ENCODE measurements at regions of chr2 and their contacts with region 1.

Region 1: GRCh38 chr2:69816923-69817542 is 12.4 kb upstream of the GMCL1 start:
- DNase-seq: peak; percentile 68
- H3K4me3 Mint-ChIP-seq: no peak overlapping the region
- H3K27ac Mint-ChIP-seq: no peak overlapping the region
- H3K4me1 Mint-ChIP-seq: peaks cover 13% of the 10 kb centered on the region
- H3K27me3 Mint-ChIP-seq: no peaks in the 10 kb centered on the region

Region 2: GRCh38 chr2:69559442-69560146 is 257.4 kb before region 1 on chr2:
- intact Hi-C with region 1: loop called (anchors 1 kb)
- DNase-seq: no peak
- H3K4me3 Mint-ChIP-seq: no peak overlapping the region
- H3K27ac Mint-ChIP-seq: peak overlapping the region; percentile 59
- H3K4me1 Mint-ChIP-seq: peaks cover 52% of the 10 kb centered on the region
- H3K27me3 Mint-ChIP-seq: no peaks in the 10 kb centered on the region

Region 3: DNA sequence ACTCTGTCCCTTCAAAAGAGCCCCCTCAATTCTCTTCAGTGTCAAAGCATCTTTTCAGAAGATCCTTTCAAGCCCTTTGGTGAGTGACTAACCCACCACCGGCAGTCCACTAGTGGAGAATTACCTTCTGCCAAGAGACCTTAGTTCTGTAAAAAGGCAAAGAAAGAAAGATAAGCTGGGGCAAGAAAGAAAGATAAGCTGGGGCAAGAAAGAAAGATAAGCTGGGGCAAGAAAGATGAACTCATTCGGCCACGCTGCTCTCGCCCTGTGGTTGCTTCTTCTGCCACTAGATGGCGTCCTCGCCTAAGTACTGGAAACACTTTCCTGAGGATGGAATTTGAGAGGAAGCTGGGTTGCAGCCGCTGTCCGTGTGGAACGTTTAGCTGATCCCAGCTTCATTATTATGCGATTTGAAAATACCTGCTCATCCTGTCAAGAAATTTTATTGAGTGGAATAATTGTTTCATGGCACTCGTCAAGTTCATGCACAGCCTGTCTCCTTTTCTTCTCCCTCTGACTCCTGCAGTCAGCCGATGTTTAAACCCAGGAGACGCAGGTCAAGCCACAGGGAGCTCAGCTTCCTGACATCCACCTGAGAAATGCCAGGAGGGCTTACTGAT is 92.4 kb before region 1 on chr2:
- intact Hi-C with region 1: loop called (anchors 1 kb)
- DNase-seq: peak; percentile 76
- H3K4me3 Mint-ChIP-seq: peak overlapping the region; percentile 51
- H3K27ac Mint-ChIP-seq: peak overlapping the region; percentile 44
- H3K4me1 Mint-ChIP-seq: peaks cover 12% of the 10 kb centered on the region
- H3K27me3 Mint-ChIP-seq: peaks cover 8% of the 10 kb centered on the region

Region 4: GRCh38 chr2:69741619-69742466 is 75.2 kb before region 1 on chr2 and contains the start of gene ANXA4:
- intact Hi-C with region 1: loop called (anchors 1 kb)
- DNase-seq: peak; percentile 63
- H3K4me3 Mint-ChIP-seq: peak within 1 kb of the TSS; percentile 98
- H3K27ac Mint-ChIP-seq: peak within 1 kb of the TSS; percentile 96
- H3K4me1 Mint-ChIP-seq: peaks cover 26% of the 10 kb centered on the region
- H3K27me3 Mint-ChIP-seq: peaks cover 6% of the 10 kb centered on the region
- total RNA-seq, gene ANXA4: 36.2 and 38.0 TPM in 2 replicates

Region 5: DNA sequence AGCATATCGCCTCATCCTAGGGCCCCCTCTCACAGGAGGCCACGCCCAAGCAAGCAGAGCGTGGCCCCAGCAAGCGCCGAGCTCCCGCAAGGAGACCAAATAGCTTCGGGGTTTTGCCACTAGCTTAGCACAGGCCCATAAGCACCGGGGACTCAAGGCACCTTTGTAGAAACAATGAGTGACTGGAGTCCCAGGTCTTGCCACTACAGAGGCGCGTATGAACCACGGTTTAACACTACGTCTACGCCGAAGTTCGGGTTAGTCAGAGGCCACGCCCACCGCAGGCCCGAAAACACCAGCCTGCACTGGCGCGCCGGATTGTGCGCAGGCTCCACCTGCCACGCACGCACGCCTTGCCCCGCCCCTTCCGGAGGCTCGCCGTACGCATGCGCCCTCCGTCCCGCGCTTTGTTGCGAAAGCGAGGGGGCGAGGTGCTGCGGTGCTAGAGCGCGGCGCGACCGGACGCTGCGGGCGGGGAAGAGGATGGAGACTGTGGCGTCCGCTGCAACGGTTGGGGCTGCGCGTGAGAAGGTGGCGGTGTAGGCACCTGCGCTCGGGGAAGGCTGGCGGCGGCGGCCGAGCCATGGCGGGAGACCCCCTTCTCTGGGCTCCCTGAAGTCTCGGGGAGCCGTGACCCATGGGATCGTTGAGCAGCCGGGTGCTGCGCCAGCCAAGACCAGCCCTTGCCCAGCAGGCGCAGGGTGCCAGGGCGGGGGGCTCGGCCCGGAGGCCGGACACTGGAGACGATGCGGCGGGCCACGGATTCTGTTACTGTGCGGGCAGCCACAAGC is 12.4 kb after region 1 on chr2 and contains the start of gene GMCL1:
- intact Hi-C with region 1: loop called (anchors 1 kb)
- DNase-seq: peak; percentile 99
- H3K4me3 Mint-ChIP-seq: peak within 1 kb of the TSS; percentile 98
- H3K27ac Mint-ChIP-seq: peak within 1 kb of the TSS; percentile 95
- H3K4me1 Mint-ChIP-seq: peaks cover 59% of the 10 kb centered on the region
- H3K27me3 Mint-ChIP-seq: no peaks in the 10 kb centered on the region
- total RNA-seq, gene GMCL1: 25.6 and 32.8 TPM in 2 replicates